PC-9 (cell line): ENCODE measurements at regions of chr2 and their contacts with region 1.

Region 1: GRCh38 chr2:209391776-209392401 is 32.0 kb upstream of the MAP2 start:
- DNase-seq: peak in 1 of 2 experiments; percentile 65
- H3K4me3 ChIP-seq: no peak overlapping the region
- H3K27ac ChIP-seq: peak overlapping the region; percentile 36
- H3K4me1 ChIP-seq: peaks cover 15% of the 10 kb centered on the region
- H3K27me3 ChIP-seq: no peaks in the 10 kb centered on the region
- CTCF ChIP-seq: no peak

Region 2: GRCh38 chr2:209348433-209348832 is 43.5 kb before region 1 on chr2:
- CTCF ChIA-PET with region 1: no interaction called
- POLR2A ChIA-PET with region 1: no interaction called
- intact Hi-C with region 1: loop called (anchors 10 kb)
- DNase-seq: no peak
- H3K4me3 ChIP-seq: no peak overlapping the region
- H3K27ac ChIP-seq: no peak overlapping the region
- H3K4me1 ChIP-seq: no peaks in the 10 kb centered on the region
- H3K27me3 ChIP-seq: no peaks in the 10 kb centered on the region
- CTCF ChIP-seq: no peak

Region 3: DNA sequence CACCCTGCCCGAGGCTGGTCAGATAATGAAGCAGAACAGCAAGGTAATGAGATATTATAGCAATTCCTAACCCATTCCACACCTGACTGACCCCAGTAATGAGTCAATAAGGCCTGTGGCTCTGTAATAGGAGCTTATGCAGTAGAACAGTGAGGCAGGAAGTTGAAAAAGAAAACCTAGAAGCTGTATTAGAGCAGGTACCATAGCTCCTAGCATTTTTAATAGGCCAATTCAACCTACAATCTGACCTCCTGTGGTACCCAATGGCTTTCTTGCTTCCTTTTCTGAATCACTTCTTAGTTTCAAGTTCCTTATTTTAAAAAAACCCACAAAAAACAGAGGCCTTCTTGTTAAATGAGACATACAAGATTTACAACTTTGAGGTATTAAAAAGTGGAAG is 11.6 kb before region 1 on chr2:
- CTCF ChIA-PET with region 1: no interaction called
- POLR2A ChIA-PET with region 1: no interaction called
- intact Hi-C with region 1: no loop called
- DNase-seq: peak in 1 of 2 experiments; percentile 42
- H3K4me3 ChIP-seq: no peak overlapping the region
- H3K27ac ChIP-seq: peak overlapping the region; percentile 39; the same call in 1 of the 2 replicates
- H3K4me1 ChIP-seq: peaks cover 19% of the 10 kb centered on the region
- H3K27me3 ChIP-seq: no peaks in the 10 kb centered on the region
- CTCF ChIP-seq: no peak